ENCODE measurements at regions of chr4 and their contacts with region 1.

Region 1: DNA sequence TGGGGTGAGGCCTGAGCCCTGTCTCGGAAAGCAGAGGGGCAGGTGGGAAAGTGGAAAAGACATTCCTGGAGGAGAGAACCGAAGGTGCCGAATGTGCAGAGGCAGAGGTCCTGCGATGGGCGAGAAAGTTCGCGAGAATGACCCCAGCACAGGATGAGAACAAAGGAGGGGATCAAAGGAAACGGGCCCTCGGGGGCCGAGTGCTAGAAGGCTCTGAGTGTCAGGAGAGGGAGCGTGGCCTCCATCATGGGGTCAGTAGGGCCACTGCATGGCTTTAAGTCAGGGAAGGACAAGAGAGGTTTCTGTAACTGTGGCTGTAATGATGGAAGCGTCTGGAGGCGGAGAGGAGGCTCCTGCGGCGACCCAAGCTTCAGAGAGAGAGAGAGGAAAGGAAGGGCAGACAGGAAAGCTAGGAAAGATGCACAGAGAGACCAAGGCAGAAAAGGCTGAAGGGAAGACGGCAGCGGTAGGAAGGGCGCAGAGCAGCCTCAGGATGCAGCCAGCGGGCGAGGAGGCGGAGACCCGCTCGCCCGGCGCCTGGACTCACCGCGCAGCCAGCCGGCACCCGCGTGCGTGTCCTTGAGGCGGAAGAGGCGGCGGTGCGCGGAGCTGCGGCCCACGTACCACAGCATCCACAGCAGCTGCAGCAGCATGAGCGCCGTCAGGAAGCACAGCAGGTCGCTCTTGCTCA is 669 bp downstream of the OTOP1 start:
- DNase-seq: no peak
- H3K4me3 ChIP-seq: no peak overlapping the region
- H3K27ac ChIP-seq: no peak overlapping the region
- H3K4me1 ChIP-seq: no peaks in the 10 kb centered on the region
- H3K27me3 ChIP-seq: peaks cover 36% of the 10 kb centered on the region
- CTCF ChIP-seq: no peak

Region 2: GRCh38 chr4:4182835-4183568 is 43.1 kb before region 1 on chr4:
- CTCF ChIA-PET with region 1: no interaction called
- POLR2A ChIA-PET with region 1: no interaction called
- intact Hi-C with region 1: no loop called
- DNase-seq: no peak
- H3K4me3 ChIP-seq: no peak overlapping the region
- H3K27ac ChIP-seq: no peak overlapping the region
- H3K4me1 ChIP-seq: no peaks in the 10 kb centered on the region
- H3K27me3 ChIP-seq: peaks cover 38% of the 10 kb centered on the region; the same call in 1 of the 2 replicates
- CTCF ChIP-seq: peak; percentile 72

Region 3: GRCh38 chr4:4260253-4260652 is 34.2 kb after region 1 on chr4:
- CTCF ChIA-PET with region 1: no interaction called
- POLR2A ChIA-PET with region 1: no interaction called
- intact Hi-C with region 1: no loop called
- DNase-seq: peak in 1 of 2 experiments; percentile 52
- H3K4me3 ChIP-seq: no peak overlapping the region
- H3K27ac ChIP-seq: no peak overlapping the region
- H3K4me1 ChIP-seq: peaks cover 8% of the 10 kb centered on the region
- H3K27me3 ChIP-seq: peaks cover 9% of the 10 kb centered on the region; the same call in 1 of the 2 replicates
- CTCF ChIP-seq: peak; percentile 55

Region 4: DNA sequence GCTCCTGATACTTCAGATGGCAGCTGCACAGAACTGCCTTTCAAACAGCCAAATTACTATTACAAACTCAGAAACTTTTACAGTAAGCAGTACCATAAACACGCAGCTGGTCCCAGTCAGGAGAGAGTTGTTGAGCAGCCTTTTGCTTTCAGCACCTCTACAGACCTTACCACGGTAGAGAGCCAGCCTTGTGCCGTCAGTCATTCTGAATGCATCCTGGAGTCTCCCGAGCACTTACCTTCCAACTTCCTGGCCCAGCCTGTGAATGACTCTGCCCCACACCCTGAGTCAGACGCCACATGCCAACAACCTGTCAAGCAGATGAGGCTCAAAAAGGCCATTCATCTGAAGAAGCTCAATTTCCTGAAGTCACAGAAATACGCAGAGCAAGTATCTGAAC is 76.4 kb after region 1 on chr4:
- CTCF ChIA-PET with region 1: no interaction called
- POLR2A ChIA-PET with region 1: interaction called, 14 read pairs
- intact Hi-C with region 1: no loop called
- DNase-seq: no peak
- H3K4me3 ChIP-seq: no peak overlapping the region
- H3K27ac ChIP-seq: no peak overlapping the region
- H3K4me1 ChIP-seq: no peaks in the 10 kb centered on the region
- H3K27me3 ChIP-seq: no peaks in the 10 kb centered on the region
- CTCF ChIP-seq: no peak